Ascending aorta (tissue), 2 donors: ENCODE measurements at regions of chr5 and their contacts with region 1.

Region 1: GRCh38 chr5:173057062-173057924 is 1.1 kb downstream of the CREBRF start:
- DNase-seq: peak; percentile 98 to 100
- H3K4me3 ChIP-seq: peak overlapping the region; percentile 76 to 98
- H3K27ac ChIP-seq: peak overlapping the region; percentile 93 to 100
- H3K4me1 ChIP-seq: peaks cover 0 to 23% of the 10 kb centered on the region in 2 donors
- H3K27me3 ChIP-seq: no peaks in the 10 kb centered on the region
- CTCF ChIP-seq: peak; percentile 19 to 30 (median 21)

Region 2: GRCh38 chr5:172235827-172236736 is 821.2 kb before region 1 on chr5:
- intact Hi-C with region 1: no loop called
- DNase-seq: no peak
- H3K4me3 ChIP-seq: no peak overlapping the region
- H3K27ac ChIP-seq: no peak overlapping the region
- H3K4me1 ChIP-seq: no peaks in the 10 kb centered on the region
- H3K27me3 ChIP-seq: no peaks in the 10 kb centered on the region
- CTCF ChIP-seq: no peak

Region 3: GRCh38 chr5:173016621-173017047 is 40.7 kb before region 1 on chr5:
- intact Hi-C with region 1: loop called (anchors 2 kb)
- DNase-seq: peak in 1 of 2 donors; percentile 75
- H3K4me3 ChIP-seq: peak overlapping the region in 1 of 2 donors; percentile 33
- H3K27ac ChIP-seq: peak overlapping the region; percentile 79 to 88
- H3K4me1 ChIP-seq: peaks cover 9 to 27% of the 10 kb centered on the region in 2 donors
- H3K27me3 ChIP-seq: no peaks in the 10 kb centered on the region
- CTCF ChIP-seq: no peak

Region 4: GRCh38 chr5:173144200-173145176 is 87.2 kb after region 1 on chr5 and contains the start of gene BNIP1:
- intact Hi-C with region 1: loop called (anchors 1 kb)
- DNase-seq: peak; percentile 78 to 96
- H3K4me3 ChIP-seq: peak within 1 kb of the TSS; percentile 58 to 98
- H3K27ac ChIP-seq: peak within 1 kb of the TSS; percentile 82 to 86
- H3K4me1 ChIP-seq: peaks cover 0 to 4% of the 10 kb centered on the region in 2 donors
- H3K27me3 ChIP-seq: no peaks in the 10 kb centered on the region
- CTCF ChIP-seq: peak; percentile 82 to 91 (median 90)
- total RNA-seq, gene BNIP1: 11.3 TPM